ENCODE measurements at regions of chr3 and their contacts with region 1.

Region 1: GRCh38 chr3:150408221-150409102 is at the start of gene TSC22D2:
- DNase-seq: peak; percentile 93
- H3K4me3 Mint-ChIP-seq: peak within 1 kb of the TSS; percentile 80
- H3K27ac Mint-ChIP-seq: peak within 1 kb of the TSS; percentile 91
- H3K4me1 Mint-ChIP-seq: peaks cover 33% of the 10 kb centered on the region
- H3K27me3 Mint-ChIP-seq: peaks cover 4% of the 10 kb centered on the region
- total RNA-seq, gene TSC22D2: 13.9 to 15.0 TPM

Region 2: GRCh38 chr3:150359381-150359780 is 49.1 kb before region 1 on chr3:
- CTCF ChIA-PET with region 1: no interaction called
- POLR2A ChIA-PET with region 1: no interaction called
- DNase-seq: no peak
- H3K4me3 Mint-ChIP-seq: no peak overlapping the region
- H3K27ac Mint-ChIP-seq: no peak overlapping the region
- H3K4me1 Mint-ChIP-seq: no peaks in the 10 kb centered on the region
- H3K27me3 Mint-ChIP-seq: no peaks in the 10 kb centered on the region

Region 3: DNA sequence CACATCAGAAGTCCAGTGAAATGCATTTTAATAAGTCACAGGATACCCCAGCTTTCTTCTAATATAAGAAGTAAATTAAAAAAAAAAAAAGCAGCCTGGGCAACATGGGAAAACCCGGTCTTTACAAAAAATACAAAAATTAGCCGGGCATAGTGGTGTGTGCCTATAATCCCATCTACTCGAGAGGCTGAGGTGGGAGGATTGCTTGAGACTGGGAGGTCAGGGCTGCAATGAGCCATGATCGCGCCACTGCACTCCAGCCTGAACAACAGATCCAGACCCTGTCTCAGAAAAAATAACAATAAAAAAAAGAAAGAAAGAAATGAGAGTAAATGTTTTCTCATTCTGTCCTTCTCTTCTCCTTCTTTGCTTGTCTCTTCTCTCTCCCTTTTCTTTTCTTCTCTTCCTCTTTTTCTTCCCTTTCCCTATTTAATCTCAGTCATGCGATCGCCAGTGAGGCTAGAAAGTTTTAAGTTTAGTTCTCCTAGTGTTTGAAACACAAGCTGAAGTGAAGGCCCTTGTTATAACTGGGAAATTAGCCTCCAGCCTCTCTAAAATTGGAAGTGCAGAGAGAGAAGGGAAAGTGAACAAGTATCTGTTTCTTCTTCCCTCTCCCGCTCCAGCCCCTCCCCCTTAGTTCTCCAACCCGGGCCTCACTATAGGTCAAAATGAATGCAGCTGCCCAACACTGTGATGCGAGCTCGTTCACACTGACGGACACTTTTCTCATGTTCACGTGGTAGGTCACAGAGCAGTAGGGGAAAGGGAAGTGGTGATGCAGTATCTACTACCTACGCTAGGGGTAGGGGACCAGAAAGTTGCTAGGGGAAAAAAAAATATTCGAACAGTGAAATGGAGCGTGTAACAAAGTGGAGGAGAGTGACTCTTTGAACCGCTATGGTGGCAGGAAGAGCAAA is 23.9 kb before region 1 on chr3:
- CTCF ChIA-PET with region 1: interaction called, 5 read pairs
- POLR2A ChIA-PET with region 1: interaction called, 14 read pairs
- DNase-seq: peak; percentile 46
- H3K4me3 Mint-ChIP-seq: peak overlapping the region; percentile 15
- H3K27ac Mint-ChIP-seq: peak overlapping the region; percentile 9
- H3K4me1 Mint-ChIP-seq: peaks cover 25% of the 10 kb centered on the region
- H3K27me3 Mint-ChIP-seq: peaks cover 1% of the 10 kb centered on the region

Region 4: GRCh38 chr3:150495563-150496168 is 87.2 kb after region 1 on chr3:
- CTCF ChIA-PET with region 1: interaction called, 37 read pairs
- POLR2A ChIA-PET with region 1: interaction called, 3 read pairs
- DNase-seq: no peak
- H3K4me3 Mint-ChIP-seq: no peak overlapping the region
- H3K27ac Mint-ChIP-seq: no peak overlapping the region
- H3K4me1 Mint-ChIP-seq: no peaks in the 10 kb centered on the region
- H3K27me3 Mint-ChIP-seq: no peaks in the 10 kb centered on the region